ENCODE measurements at regions of chr1 and their contacts with region 1.

Region 1: DNA sequence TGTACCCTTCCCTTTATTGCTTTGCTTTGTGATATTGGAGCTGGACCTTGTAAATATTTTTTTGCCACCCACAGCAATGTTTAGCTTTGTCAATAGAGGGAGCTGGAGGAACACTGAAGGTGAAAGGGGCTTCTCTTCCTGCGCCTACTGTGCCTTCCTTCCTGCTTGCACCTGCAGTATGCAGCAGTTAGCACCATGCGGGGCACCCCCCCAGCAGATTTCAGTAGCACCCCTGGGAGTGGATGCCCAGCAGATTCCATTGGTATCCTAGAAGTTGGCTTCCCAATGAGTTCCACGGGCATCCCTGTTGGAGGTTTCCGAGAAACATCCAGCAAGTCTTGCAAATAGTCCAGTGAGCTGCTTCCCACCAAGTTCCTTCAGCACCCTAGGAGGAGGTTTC is 25.6 kb downstream of the S100A10 start:
- DNase-seq: peak; percentile 89
- ATAC-seq: peak; percentile 48
- H3K4me3 ChIP-seq: no peak overlapping the region
- H3K27ac ChIP-seq: no peak overlapping the region
- H3K4me1 ChIP-seq: peaks cover 66% of the 10 kb centered on the region
- H3K27me3 ChIP-seq: no peaks in the 10 kb centered on the region
- CTCF ChIP-seq: peak; percentile 97

Region 2: DNA sequence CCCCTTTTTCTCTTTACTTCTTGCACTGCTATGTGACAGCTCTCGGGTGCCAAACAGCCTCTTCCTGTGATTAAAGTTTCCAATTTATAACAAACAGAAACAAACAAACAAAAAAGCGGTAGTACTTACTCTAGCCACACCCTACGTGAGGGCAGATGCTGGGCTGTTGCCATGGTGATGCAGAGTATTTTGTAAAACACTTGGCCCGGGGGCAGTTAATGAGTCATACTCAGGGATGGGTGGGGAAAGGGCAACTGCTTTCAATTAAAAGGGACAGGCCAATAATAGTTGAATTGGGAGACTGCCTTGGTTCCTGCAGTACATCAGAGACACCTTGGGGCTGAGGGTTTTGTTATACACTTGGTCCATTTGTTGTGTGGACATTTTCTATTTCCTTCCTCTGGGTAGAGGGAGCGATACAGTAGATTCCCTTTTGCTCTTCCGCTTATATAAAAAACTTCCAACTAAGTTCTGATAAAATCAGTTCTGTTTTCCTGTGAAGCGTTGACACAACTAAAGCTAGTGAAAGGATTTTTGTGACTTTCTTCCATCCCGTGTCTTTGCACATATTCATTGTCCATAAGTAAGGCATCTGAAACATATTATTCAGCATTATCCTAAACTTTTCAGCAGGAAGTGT is 22.2 kb before region 1 on chr1:
- CTCF ChIA-PET with region 1: interaction called, 3 read pairs
- POLR2A ChIA-PET with region 1: interaction called, 7 read pairs
- intact Hi-C with region 1: loop called (anchors 1 kb)
- DNase-seq: peak; percentile 100
- ATAC-seq: peak; percentile 76
- H3K4me3 ChIP-seq: peak overlapping the region; percentile 56
- H3K27ac ChIP-seq: peak overlapping the region; percentile 96
- H3K4me1 ChIP-seq: peaks cover 51% of the 10 kb centered on the region
- H3K27me3 ChIP-seq: no peaks in the 10 kb centered on the region
- CTCF ChIP-seq: no peak

Region 3: DNA sequence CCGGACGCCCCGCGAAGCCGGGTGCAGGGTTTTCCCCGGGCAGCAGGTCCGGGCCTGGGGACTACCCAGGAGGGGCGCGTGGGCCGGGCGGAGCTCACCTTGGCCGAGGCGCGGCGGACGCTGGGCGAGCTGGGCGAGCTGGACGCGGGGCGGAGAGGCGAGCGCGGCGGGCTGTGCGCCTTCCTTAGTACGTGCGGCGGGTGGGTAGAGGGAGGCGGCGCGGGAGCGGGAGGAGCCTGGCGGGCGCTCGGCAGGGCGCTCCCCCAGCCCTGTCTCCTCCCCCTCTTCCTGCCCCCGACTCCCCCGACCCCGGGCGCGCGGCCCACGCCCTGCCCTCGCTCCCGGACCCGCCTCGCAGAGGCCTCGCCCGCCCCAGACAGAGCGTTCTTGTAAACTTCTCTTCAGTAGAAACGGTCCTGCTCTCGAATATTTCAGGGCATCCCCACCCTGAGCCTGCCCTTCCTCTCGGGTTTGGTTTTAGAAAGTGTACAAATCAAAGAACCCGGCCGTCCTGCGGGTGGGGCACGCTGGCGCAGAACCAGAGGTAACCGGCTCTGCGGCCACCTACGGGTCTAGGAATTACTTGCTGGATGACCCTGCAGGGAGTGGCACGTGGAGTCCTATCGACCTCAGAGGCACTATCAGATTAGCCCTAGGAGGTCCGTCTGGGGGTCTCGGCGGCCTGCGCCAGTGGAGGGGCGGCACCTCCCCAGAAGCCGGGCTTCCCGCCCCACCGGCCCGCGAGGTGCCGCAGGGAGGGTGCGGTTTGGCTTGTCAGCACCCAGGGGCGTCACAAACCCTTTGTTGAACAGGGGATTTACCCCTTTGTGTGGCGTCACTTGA is 25.8 kb after region 1 on chr1 and contains the start of gene S100A10:
- CTCF ChIA-PET with region 1: interaction called, 18 read pairs
- POLR2A ChIA-PET with region 1: interaction called, 14 read pairs
- intact Hi-C with region 1: loop called (anchors 1 kb)
- DNase-seq: peak; percentile 89
- ATAC-seq: peak; percentile 25
- H3K4me3 ChIP-seq: peak within 1 kb of the TSS; percentile 91
- H3K27ac ChIP-seq: peak within 1 kb of the TSS; percentile 97
- H3K4me1 ChIP-seq: peaks cover 76% of the 10 kb centered on the region
- H3K27me3 ChIP-seq: no peaks in the 10 kb centered on the region
- CTCF ChIP-seq: no peak
- total RNA-seq, gene S100A10: 349 and 400 TPM in 2 replicates

Region 4: GRCh38 chr1:152001391-152002249 is 33.6 kb after region 1 on chr1:
- CTCF ChIA-PET with region 1: interaction called, 38 read pairs
- POLR2A ChIA-PET with region 1: interaction called, 5 read pairs
- intact Hi-C with region 1: loop called (anchors 1 kb)
- DNase-seq: peak; percentile 97
- ATAC-seq: peak; percentile 34
- H3K4me3 ChIP-seq: no peak overlapping the region
- H3K27ac ChIP-seq: no peak overlapping the region
- H3K4me1 ChIP-seq: peaks cover 45% of the 10 kb centered on the region
- H3K27me3 ChIP-seq: no peaks in the 10 kb centered on the region
- CTCF ChIP-seq: peak; percentile 98

Region 5: DNA sequence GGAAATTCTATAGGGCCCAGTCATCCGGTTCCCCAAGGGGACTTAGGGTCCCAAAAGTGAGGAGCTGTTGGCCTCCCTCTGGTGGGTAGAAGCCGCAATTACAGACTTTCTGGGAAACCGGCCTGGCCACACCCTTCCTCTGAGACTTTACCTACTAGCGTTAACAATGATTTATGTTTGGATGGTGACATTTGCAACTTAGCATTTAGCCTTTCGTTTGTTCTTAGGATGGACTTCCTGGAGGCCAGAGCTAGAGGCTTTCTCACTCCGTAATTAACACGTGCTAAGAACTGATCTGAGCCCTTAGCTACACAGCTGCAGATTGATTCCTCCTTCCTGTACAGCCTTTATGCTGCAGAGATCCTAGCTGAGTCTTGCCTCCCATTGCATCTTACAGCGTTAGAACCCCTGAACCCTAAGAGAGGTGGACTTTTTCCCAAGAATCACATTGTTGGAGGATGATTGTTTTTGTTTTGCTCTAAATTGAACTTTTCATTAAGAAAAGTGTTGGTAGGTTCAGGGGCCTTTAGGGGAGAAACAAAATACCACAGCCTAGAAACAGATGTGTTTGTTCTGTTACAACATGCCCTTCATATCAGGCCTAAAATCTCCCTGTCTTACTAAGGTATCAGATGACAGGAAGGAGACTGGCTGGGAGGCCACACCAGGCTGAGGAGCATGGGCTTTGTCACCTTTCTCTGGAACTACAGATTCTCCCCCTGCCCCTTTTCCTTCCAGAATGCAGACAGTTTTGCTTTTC is 66.8 kb after region 1 on chr1:
- CTCF ChIA-PET with region 1: no interaction called
- POLR2A ChIA-PET with region 1: interaction called, 5 read pairs
- intact Hi-C with region 1: loop called (anchors 2 kb)
- DNase-seq: peak; percentile 90
- ATAC-seq: peak; percentile 69
- H3K4me3 ChIP-seq: peak overlapping the region; percentile 77
- H3K27ac ChIP-seq: peak overlapping the region; percentile 90
- H3K4me1 ChIP-seq: peaks cover 33% of the 10 kb centered on the region
- H3K27me3 ChIP-seq: no peaks in the 10 kb centered on the region
- CTCF ChIP-seq: peak; percentile 89

Region 6: DNA sequence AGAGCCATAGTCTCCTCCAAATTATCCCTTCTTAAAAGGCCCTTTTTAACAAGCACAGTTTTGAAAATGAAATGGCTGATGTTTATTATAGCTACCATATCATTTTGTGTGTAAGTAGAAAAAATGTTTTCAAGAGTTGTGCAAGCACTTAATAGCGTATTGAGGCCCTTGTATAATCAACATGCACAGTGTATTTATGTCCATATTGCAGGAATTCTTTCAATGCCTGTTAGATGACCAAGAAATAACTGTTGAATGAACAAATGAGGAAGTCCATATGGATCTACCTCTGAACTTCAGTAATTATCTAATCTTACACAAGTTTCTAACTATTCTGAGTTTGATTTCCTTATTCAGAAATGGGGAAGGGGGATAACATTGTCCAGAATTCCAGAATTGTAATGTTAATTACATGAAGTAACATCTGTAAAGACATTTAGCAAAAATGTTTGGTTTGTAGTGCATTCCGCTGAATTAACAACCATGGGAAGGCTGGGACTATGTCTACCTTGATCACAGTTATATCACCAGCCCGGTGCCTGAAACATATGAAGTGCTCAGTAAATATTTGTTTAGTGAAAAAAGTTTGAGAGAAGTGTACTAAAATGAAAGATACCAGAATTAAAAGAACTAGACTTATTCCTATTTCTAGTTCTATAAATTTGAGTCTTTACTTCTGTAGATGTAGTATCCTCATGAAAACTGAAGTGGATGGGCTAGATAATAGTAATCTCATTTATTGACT is 128.2 kb after region 1 on chr1:
- CTCF ChIA-PET with region 1: no interaction called
- POLR2A ChIA-PET with region 1: no interaction called
- intact Hi-C with region 1: no loop called
- DNase-seq: no peak
- ATAC-seq: no peak
- H3K4me3 ChIP-seq: no peak overlapping the region
- H3K27ac ChIP-seq: no peak overlapping the region
- H3K4me1 ChIP-seq: no peaks in the 10 kb centered on the region
- H3K27me3 ChIP-seq: peaks cover 52% of the 10 kb centered on the region
- CTCF ChIP-seq: no peak

Measured in PC-3 (cell line).